ENCODE measurements at regions of chrX and their contacts with region 1.

Region 1: DNA sequence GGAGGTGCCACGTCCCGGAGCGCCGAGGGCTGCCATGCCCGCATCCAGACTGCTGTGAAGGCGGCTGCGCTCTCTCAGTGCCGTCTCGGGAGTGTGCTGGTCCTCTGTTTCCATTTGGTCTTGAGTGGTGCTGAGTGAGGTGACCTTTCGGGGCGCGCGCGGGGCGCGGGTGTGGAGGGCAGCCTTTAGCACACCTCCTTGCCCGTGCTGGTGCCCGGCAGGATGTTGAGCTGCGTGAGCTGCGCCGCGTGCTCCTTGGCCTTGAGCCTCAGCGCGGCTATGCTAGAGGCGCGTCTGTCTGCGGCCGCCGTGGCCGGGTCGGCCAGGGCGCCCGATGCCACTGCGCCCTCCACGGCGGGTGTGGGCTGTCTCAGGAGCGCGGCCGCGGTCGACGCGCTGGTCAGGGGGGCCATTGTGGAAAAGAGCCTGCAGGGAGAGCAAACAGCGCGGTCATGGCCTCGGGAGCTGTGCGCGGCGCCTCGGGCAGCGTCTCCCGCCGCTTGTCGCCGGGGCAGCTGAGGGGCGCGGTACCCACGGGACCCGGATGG is 11.2 kb downstream of the ARX start:
- DNase-seq: peak; percentile 45 to 66 (median 61)
- H3K4me3 ChIP-seq: peak overlapping the region; percentile 20
- H3K27ac ChIP-seq: peak overlapping the region; percentile 93
- H3K4me1 ChIP-seq: no peaks in the 10 kb centered on the region
- H3K27me3 ChIP-seq: no peaks in the 10 kb centered on the region
- CTCF ChIP-seq: no peak
- EP300 ChIP-seq: no peak
- POLR2A ChIP-seq: no peak

Region 2: GRCh38 chrX:24805201-24805600 is 199.4 kb before region 1 on chrX:
- intact Hi-C with region 1: no loop called
- DNase-seq: no peak
- H3K4me3 ChIP-seq: no peak overlapping the region
- H3K27ac ChIP-seq: no peak overlapping the region
- H3K4me1 ChIP-seq: no peaks in the 10 kb centered on the region
- H3K27me3 ChIP-seq: no peaks in the 10 kb centered on the region
- CTCF ChIP-seq: no peak
- EP300 ChIP-seq: no peak
- POLR2A ChIP-seq: no peak

Region 3: DNA sequence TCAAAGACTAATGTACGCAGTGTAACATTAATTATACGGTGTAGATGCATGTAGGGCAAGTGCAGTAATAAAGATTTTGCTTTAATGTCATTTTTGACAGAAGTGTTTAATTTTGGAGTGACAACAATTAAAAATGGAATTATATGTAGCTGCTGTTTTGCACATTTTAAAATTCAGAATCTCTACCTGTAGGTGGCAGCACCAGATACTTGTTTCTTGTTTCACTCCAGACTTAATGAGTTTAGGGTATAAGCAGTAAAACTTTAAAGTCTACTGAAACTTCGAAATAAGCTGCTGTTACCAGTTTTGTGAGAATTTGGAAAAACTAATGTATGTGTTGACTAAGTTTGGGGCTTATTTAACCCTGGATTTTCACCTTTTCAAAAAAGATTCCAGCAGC is 165.9 kb before region 1 on chrX:
- intact Hi-C with region 1: loop called in 2 of 4 experiments (anchors 5 to 10 kb)
- DNase-seq: no peak
- H3K4me3 ChIP-seq: no peak overlapping the region
- H3K27ac ChIP-seq: no peak overlapping the region
- H3K4me1 ChIP-seq: no peaks in the 10 kb centered on the region
- H3K27me3 ChIP-seq: no peaks in the 10 kb centered on the region
- CTCF ChIP-seq: peak; percentile 19 to 42 (median 28)
- EP300 ChIP-seq: no peak
- POLR2A ChIP-seq: no peak

Region 4: DNA sequence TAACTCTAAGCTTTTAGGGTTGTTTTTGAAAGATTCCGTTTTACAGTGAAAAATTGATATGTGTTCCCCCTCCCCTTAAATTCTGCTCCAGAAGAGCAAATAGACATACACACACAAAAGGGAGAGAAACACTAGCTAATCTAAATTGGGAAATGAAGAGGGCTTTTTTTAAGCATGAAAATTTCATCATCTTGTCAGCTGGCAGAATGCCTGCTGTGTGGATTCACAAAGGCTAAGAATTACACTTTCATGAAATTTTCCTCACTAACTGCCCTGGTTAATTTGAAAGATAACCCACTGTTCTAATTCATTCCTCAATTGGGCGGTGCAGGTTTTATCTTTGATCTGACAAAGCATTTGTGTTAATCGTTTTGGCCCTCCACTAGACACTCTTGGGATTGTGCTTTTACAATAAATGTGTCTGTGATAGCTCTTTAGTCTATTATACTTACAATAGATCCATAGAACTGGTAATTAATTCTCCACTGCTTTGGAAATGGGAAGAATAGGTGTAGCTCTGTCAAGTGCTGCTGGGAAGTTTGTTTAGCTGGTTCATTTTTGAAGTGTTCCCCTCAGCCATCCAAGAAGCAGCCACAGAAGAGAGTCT is 157.9 kb before region 1 on chrX:
- intact Hi-C with region 1: loop called in 2 of 4 experiments (anchors 5 to 10 kb)
- DNase-seq: peak in 4 of 5 donors; percentile 21 to 75 (median 59)
- H3K4me3 ChIP-seq: no peak overlapping the region
- H3K27ac ChIP-seq: no peak overlapping the region
- H3K4me1 ChIP-seq: no peaks in the 10 kb centered on the region
- H3K27me3 ChIP-seq: no peaks in the 10 kb centered on the region
- CTCF ChIP-seq: no peak
- EP300 ChIP-seq: no peak
- POLR2A ChIP-seq: no peak

Region 5: GRCh38 chrX:24870143-24870542 is 134.4 kb before region 1 on chrX:
- intact Hi-C with region 1: loop called in 1 of 4 experiments (anchors 10 kb)
- DNase-seq: no peak
- H3K4me3 ChIP-seq: no peak overlapping the region
- H3K27ac ChIP-seq: no peak overlapping the region
- H3K4me1 ChIP-seq: no peaks in the 10 kb centered on the region
- H3K27me3 ChIP-seq: no peaks in the 10 kb centered on the region
- CTCF ChIP-seq: no peak
- EP300 ChIP-seq: no peak
- POLR2A ChIP-seq: no peak